ENCODE measurements at regions of chr4 and their contacts with region 1.

Region 1: GRCh38 chr4:40193016-40193571 is 3.7 kb upstream of the RHOH start:
- DNase-seq: peak in 8 of 9 donors; percentile 41 to 80 (median 74)
- ATAC-seq: peak; percentile 44
- H3K4me3 ChIP-seq: peak overlapping the region; percentile 61
- H3K4me3 Mint-ChIP-seq: peak overlapping the region; percentile 96 to 100 (median 99)
- H3K27ac ChIP-seq: peak overlapping the region; percentile 100
- H3K27ac Mint-ChIP-seq: peak overlapping the region; percentile 93 to 100 (median 99)
- H3K4me1 ChIP-seq: peaks cover 23 to 47% of the 10 kb centered on the region in 2 donors
- H3K4me1 Mint-ChIP-seq: peaks cover 47 to 80% (median 65%) of the 10 kb centered on the region in 7 donors
- H3K27me3 ChIP-seq: no peaks in the 10 kb centered on the region
- H3K27me3 Mint-ChIP-seq: peaks cover 0 to 4% (median 0%) of the 10 kb centered on the region in 5 donors

Region 2: GRCh38 chr4:38322714-38323113 is 1870.4 kb before region 1 on chr4:
- CTCF ChIA-PET with region 1: no interaction called
- POLR2A ChIA-PET with region 1: no interaction called
- intact Hi-C with region 1: no loop called
- DNase-seq: no peak
- ATAC-seq: no peak
- H3K4me3 ChIP-seq: no peak overlapping the region
- H3K4me3 Mint-ChIP-seq: peak overlapping the region in 2 of 10 donors; percentile 25 to 52
- H3K27ac ChIP-seq: no peak overlapping the region
- H3K27ac Mint-ChIP-seq: peak overlapping the region in 5 of 9 donors; percentile 7 to 81 (median 38)
- H3K4me1 ChIP-seq: peaks cover 19 to 63% of the 10 kb centered on the region in 2 donors
- H3K4me1 Mint-ChIP-seq: peaks cover 41 to 96% (median 87%) of the 10 kb centered on the region in 7 donors
- H3K27me3 ChIP-seq: no peaks in the 10 kb centered on the region
- H3K27me3 Mint-ChIP-seq: peaks cover 0 to 5% (median 0%) of the 10 kb centered on the region in 5 donors

Region 3: GRCh38 chr4:40173470-40173875 is 19.6 kb before region 1 on chr4:
- CTCF ChIA-PET with region 1: interaction called, 5 read pairs
- POLR2A ChIA-PET with region 1: interaction called, 17 read pairs
- intact Hi-C with region 1: loop called (anchors 2 kb)
- DNase-seq: no peak
- ATAC-seq: peak; percentile 63
- H3K4me3 ChIP-seq: no peak overlapping the region
- H3K4me3 Mint-ChIP-seq: peak overlapping the region; percentile 50 to 79 (median 73)
- H3K27ac ChIP-seq: peak overlapping the region; percentile 38
- H3K27ac Mint-ChIP-seq: peak overlapping the region; percentile 71 to 94 (median 83)
- H3K4me1 ChIP-seq: peaks cover 0 to 8% of the 10 kb centered on the region in 2 donors
- H3K4me1 Mint-ChIP-seq: peaks cover 14 to 33% (median 29%) of the 10 kb centered on the region in 7 donors
- H3K27me3 ChIP-seq: no peaks in the 10 kb centered on the region
- H3K27me3 Mint-ChIP-seq: no peaks in the 10 kb centered on the region

Region 4: DNA sequence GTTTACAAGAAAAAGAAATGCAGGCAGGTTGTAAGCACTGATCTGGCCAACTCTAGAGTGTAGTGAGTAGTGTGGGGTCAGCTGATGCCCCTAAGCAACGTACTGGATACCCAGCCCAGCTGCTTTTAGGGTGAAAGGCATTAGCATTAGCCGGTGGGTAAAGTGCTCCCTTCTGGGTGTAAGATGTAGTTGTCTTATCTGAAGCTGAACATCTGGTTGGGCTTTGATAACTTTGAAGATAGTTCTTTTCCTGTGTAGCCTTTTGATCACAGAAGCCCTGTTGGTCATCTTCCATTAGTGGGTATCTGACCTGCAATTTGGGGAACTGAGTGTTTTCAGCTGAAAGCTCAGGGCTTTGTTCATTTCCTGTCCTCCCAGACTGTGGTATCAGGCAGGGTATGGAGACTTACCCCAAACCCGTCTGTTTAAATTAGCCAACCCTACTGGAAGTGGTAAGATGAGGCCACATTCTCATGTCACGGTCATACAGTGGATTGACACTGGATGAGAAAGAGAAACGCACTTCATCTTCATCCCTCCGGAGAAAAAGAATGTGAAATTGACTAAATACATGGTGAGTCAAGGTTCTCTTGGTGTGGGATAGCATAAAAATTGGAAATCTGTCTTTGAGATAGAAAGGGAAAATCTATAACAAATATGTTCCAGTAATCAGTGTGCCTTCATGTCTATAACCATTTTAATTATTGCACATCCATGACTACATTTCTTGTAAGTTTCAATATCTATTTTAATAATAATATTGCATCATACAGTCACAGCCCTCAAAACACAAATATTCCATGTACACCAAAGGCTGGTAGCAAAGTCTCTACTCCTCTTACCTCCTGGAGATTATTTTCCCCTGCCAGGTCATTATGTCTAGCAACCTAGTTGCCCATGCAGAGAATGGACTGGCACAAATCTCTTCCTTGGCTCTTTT is 12.4 kb after region 1 on chr4:
- CTCF ChIA-PET with region 1: interaction called, 11 read pairs
- POLR2A ChIA-PET with region 1: interaction called, 238 read pairs
- intact Hi-C with region 1: loop called in 1 of 2 experiments (anchors 1 kb)
- DNase-seq: peak in 1 of 9 donors; percentile 44
- ATAC-seq: peak; percentile 66
- H3K4me3 ChIP-seq: peak overlapping the region; percentile 63
- H3K4me3 Mint-ChIP-seq: peak overlapping the region; percentile 91 to 100 (median 98)
- H3K27ac ChIP-seq: peak overlapping the region; percentile 100
- H3K27ac Mint-ChIP-seq: peak overlapping the region; percentile 94 to 100 (median 98)
- H3K4me1 ChIP-seq: peaks cover 24 to 40% of the 10 kb centered on the region in 2 donors
- H3K4me1 Mint-ChIP-seq: peaks cover 55 to 78% (median 67%) of the 10 kb centered on the region in 7 donors
- H3K27me3 ChIP-seq: no peaks in the 10 kb centered on the region
- H3K27me3 Mint-ChIP-seq: no peaks in the 10 kb centered on the region

Region 5: DNA sequence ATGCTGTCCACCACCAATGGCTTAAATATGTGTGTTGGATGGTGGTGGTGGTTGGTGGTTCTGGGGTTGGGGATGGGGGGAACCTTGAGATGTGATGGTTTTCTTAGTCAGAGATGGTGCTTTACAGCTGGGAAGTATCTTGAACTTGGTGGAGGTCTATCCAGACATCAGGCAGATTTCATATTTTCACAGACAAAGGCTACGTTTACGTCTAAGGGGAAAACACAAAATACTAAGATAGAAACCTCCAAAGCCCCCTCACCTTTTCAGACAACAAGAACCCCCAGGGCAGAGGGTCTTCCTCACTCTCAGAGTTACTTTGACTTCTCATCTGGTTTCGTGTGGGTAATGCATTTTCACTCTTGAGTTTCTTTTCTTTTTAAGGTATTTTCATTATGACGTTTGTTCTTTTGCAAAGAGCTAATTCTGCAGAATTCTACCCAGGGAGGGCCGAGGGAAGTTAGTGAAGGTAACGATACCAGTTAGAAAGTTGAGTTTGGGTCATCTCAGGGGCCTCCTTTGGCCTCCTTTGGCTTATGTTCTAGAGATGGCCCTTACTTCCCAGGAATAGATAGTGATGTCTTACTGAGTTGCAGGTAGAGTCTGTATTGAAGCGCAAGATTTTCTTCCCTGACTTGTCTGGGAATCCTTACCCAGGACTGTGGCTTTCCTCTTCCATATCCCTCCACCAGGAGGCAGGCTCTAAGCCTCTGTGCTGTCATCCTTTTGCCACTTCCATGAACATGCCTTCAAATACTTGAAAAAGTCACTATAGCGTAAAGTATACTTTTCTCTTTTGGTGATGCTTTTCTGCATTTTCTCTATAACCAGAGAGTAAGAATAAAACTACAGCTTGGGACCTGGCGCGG is 35.6 kb after region 1 on chr4:
- CTCF ChIA-PET with region 1: interaction called, 12 read pairs
- POLR2A ChIA-PET with region 1: interaction called, 50 read pairs
- intact Hi-C with region 1: loop called in 1 of 2 experiments (anchors 1 kb)
- DNase-seq: peak in 1 of 9 donors; percentile 23
- ATAC-seq: no peak
- H3K4me3 ChIP-seq: peak overlapping the region; percentile 21
- H3K4me3 Mint-ChIP-seq: peak overlapping the region; percentile 74 to 87 (median 81)
- H3K27ac ChIP-seq: peak overlapping the region; percentile 74
- H3K27ac Mint-ChIP-seq: peak overlapping the region; percentile 87 to 99 (median 97)
- H3K4me1 ChIP-seq: peaks cover 86 to 98% of the 10 kb centered on the region in 2 donors
- H3K4me1 Mint-ChIP-seq: peaks cover 58 to 100% (median 90%) of the 10 kb centered on the region in 7 donors
- H3K27me3 ChIP-seq: no peaks in the 10 kb centered on the region
- H3K27me3 Mint-ChIP-seq: no peaks in the 10 kb centered on the region

Region 6: GRCh38 chr4:40301603-40302002 is 108.5 kb after region 1 on chr4:
- CTCF ChIA-PET with region 1: interaction called, 6 read pairs
- POLR2A ChIA-PET with region 1: interaction called, 229 read pairs
- intact Hi-C with region 1: loop called in 1 of 2 experiments (anchors 1 kb)
- DNase-seq: peak in 8 of 9 donors; percentile 36 to 96 (median 92)
- ATAC-seq: peak; percentile 92
- H3K4me3 ChIP-seq: peak overlapping the region; percentile 17
- H3K4me3 Mint-ChIP-seq: peak overlapping the region; percentile 56 to 88 (median 76)
- H3K27ac ChIP-seq: peak overlapping the region; percentile 74
- H3K27ac Mint-ChIP-seq: peak overlapping the region in 8 of 9 donors; percentile 94 to 99 (median 98)
- H3K4me1 ChIP-seq: peaks cover 87 to 90% of the 10 kb centered on the region in 2 donors
- H3K4me1 Mint-ChIP-seq: peaks cover 60 to 92% (median 82%) of the 10 kb centered on the region in 7 donors
- H3K27me3 ChIP-seq: no peaks in the 10 kb centered on the region
- H3K27me3 Mint-ChIP-seq: no peaks in the 10 kb centered on the region

Region 7: DNA sequence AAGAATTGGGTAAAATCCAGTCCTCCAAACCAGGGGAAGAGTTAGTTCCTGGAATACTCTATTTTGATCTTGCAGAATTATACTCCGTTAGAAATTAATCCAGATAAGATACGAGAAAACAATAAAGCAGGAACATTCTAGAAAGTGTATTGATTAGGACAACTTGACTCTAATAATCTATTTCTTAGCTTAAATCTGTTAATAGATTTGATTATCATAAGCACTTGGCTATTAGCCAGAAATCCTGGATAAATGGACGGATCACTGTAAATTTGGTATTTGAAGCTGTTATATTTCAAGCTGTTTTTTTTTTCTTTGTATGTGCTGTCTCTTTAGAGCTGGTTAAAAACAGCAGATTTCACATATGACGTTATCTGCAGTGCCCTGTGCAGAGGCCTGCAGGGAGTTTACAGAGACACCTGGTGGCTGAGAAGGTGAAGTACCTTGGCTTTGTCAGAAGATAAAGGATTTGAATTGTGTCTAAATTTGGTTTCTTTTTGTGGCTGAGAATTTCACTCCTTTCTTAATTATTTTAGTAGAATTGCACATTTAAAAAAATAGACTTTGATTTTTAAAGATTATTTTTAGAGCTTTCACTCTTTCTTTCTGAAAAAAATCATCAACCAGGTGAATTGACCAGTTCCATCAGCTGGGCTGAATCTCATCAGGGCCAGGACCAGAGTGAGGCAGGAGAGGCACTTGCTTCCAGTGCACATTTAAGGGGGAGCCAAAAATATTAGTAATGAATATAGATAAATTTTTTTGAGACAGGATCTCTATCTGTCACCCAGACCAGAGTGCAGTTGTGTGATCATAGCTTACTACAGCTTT is 132.3 kb after region 1 on chr4:
- CTCF ChIA-PET with region 1: interaction called, 12 read pairs
- POLR2A ChIA-PET with region 1: interaction called, 6 read pairs
- intact Hi-C with region 1: no loop called
- DNase-seq: peak in 7 of 9 donors; percentile 70 to 85 (median 82)
- ATAC-seq: peak; percentile 100
- H3K4me3 ChIP-seq: no peak overlapping the region
- H3K4me3 Mint-ChIP-seq: peak overlapping the region in 4 of 10 donors; percentile 0 to 48 (median 14)
- H3K27ac ChIP-seq: peak overlapping the region; percentile 45
- H3K27ac Mint-ChIP-seq: peak overlapping the region in 8 of 9 donors; percentile 25 to 87 (median 64)
- H3K4me1 ChIP-seq: peaks cover 0 to 8% of the 10 kb centered on the region in 2 donors
- H3K4me1 Mint-ChIP-seq: peaks cover 13 to 40% (median 35%) of the 10 kb centered on the region in 7 donors
- H3K27me3 ChIP-seq: no peaks in the 10 kb centered on the region
- H3K27me3 Mint-ChIP-seq: peaks cover 0 to 7% (median 4%) of the 10 kb centered on the region in 5 donors

Measured in naive thymus-derived CD4-positive, alpha-beta T cell (primary cell).